OCI-LY7 (cell line): ENCODE measurements at regions of chr18 and their contacts with region 1.

Region 1: GRCh38 chr18:25544546-25545287 is 192.8 kb upstream of the ZNF521 start:
- DNase-seq: no peak
- H3K4me3 ChIP-seq: no peak overlapping the region
- H3K27ac ChIP-seq: no peak overlapping the region
- H3K4me1 ChIP-seq: peaks cover 6% of the 10 kb centered on the region
- CTCF ChIP-seq: no peak

Region 2: GRCh38 chr18:25604894-25605597 is 60.3 kb after region 1 on chr18:
- CTCF ChIA-PET with region 1: no interaction called
- POLR2A ChIA-PET with region 1: interaction called, 3 read pairs
- intact Hi-C with region 1: loop called (anchors 10 kb)
- DNase-seq: no peak
- H3K4me3 ChIP-seq: no peak overlapping the region
- H3K27ac ChIP-seq: no peak overlapping the region
- H3K4me1 ChIP-seq: no peaks in the 10 kb centered on the region
- CTCF ChIP-seq: no peak

Region 3: DNA sequence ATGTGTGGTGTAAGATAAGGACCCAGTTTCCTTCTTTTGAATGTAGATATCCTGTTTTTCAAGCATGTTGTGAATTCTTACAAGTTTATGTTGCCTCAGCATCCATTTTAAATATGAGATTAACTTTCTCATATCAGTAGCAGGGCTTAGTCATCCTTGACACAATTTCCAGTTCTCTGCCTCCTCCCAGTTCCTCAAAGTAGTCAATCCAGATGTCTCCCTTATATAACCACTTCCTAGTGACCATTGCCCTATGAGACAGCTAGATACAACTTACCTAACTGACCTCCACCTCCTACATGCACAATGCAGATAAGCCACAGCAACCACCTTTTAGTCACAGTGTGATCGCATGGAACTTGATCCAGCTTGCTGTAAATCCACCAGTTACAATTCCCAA is 76.4 kb after region 1 on chr18:
- CTCF ChIA-PET with region 1: no interaction called
- POLR2A ChIA-PET with region 1: no interaction called
- intact Hi-C with region 1: no loop called
- DNase-seq: no peak
- H3K4me3 ChIP-seq: no peak overlapping the region
- H3K27ac ChIP-seq: no peak overlapping the region
- H3K4me1 ChIP-seq: no peaks in the 10 kb centered on the region
- CTCF ChIP-seq: no peak

Region 4: DNA sequence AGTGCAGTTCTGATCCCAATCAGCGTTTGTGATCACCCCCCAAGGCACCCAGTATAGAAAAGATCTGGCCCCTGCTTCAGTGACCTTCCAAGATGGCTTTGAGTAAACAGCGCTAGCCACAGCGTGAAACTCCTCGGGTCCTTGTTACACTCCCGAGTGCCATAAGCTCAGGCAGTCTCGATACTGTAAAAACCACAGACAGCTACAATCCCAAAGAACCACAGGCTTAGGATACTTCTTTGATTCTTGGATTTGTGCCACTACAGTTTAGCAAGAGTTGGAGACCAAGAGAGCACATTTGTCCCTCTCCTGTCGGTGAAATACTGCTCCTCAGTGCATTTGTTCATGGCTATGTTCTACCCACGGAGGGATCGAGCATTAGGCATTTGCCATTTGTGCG is 159.8 kb after region 1 on chr18:
- CTCF ChIA-PET with region 1: no interaction called
- POLR2A ChIA-PET with region 1: no interaction called
- intact Hi-C with region 1: no loop called
- DNase-seq: no peak
- H3K4me3 ChIP-seq: no peak overlapping the region
- H3K27ac ChIP-seq: no peak overlapping the region
- H3K4me1 ChIP-seq: no peaks in the 10 kb centered on the region
- CTCF ChIP-seq: no peak